Mammary epithelial cell (primary cell): ENCODE measurements at regions of chr22 and their contacts with region 1.

Region 1: GRCh38 chr22:36461669-36462649 is 19.5 kb downstream of the TXN2 start:
- DNase-seq: peak; percentile 92
- H3K4me3 ChIP-seq: no peak overlapping the region
- H3K27ac ChIP-seq: peak overlapping the region; percentile 64
- H3K4me1 ChIP-seq: peaks cover 36% of the 10 kb centered on the region
- H3K27me3 ChIP-seq: no peaks in the 10 kb centered on the region
- CTCF ChIP-seq: no peak

Region 2: GRCh38 chr22:36301384-36301828 is 160.6 kb before region 1 on chr22:
- CTCF ChIA-PET with region 1: no interaction called
- dilution Hi-C with region 1: no loop called
- in situ Hi-C with region 1: loop called in 1 of 2 experiments (anchors 5 kb)
- intact Hi-C with region 1: no loop called
- DNase-seq: peak; percentile 56
- H3K4me3 ChIP-seq: no peak overlapping the region
- H3K27ac ChIP-seq: no peak overlapping the region
- H3K4me1 ChIP-seq: peaks cover 12% of the 10 kb centered on the region
- H3K27me3 ChIP-seq: no peaks in the 10 kb centered on the region
- CTCF ChIP-seq: peak; percentile 88 to 98

Region 3: DNA sequence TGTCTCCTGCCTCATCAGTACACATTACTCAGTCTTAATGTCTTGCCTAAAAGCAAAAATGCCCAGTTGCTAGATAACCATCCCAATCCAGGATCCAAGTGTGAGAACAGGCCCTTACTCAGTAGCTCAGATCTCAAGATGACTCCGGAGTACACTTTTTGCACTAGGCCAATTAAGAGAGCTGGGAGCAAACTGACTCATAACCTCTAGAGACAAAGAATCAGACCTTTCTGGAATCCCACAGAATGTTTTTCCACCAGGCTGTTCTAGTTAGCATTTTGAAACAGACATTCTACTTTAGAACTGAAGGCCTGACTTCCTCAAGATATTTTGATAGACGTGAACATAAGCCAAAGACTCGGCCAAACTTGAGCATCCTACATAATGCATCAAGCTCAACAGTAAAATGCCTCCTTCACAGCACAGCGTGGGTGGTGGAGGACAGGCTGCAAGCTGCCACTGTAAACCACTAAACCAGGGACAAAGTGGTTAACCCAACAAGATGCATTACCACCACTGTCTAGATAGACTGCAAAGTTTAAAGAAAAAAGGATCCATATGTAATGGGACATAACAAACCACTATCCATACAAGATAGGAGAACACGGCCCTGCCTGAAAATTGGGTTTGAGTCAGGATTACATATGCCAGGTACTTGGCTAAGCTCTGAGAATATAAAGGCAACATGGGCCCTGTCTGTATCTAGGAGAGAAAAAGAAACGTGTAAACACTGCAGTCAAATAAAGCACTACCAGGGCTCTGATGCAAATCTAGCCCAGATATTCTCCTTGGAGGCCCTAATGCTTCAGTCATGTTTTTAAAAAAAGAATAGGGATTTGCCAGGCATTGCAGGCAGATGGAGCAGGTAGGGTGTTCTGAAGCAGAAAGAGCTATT is 122.5 kb before region 1 on chr22:
- CTCF ChIA-PET with region 1: no interaction called
- dilution Hi-C with region 1: loop called (anchors 5 kb)
- in situ Hi-C with region 1: no loop called
- intact Hi-C with region 1: no loop called
- DNase-seq: peak; percentile 73
- H3K4me3 ChIP-seq: no peak overlapping the region
- H3K27ac ChIP-seq: peak overlapping the region; percentile 53
- H3K4me1 ChIP-seq: peaks cover 78% of the 10 kb centered on the region
- H3K27me3 ChIP-seq: no peaks in the 10 kb centered on the region
- CTCF ChIP-seq: no peak

Region 4: DNA sequence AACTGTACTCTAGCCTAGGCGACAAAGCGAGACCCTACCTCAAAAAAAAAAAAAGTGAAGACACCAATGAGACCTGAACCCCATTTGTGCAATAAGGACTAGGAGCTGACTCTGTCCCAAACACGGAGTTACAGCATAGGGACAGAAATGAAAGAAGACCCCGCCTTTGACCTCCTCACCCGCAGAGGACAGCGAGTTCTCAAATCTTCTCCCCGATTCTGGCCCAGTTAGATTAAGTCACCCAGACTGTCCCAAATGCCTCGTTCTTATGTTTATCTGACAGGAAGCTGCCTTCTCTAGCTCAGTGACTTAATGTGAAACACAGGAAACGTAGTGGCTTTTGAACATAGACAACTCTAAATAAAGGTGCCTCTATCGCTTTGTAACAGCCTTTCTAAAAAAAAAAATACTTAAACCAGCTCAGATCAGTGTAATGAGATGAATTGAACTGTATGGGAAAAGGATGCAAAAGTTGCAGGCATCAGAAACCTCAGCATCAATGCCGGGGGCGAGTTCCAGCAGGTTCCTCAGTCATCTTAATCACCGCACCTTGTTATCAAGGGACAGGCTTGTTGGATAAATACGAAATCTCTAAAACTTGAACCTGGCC is 84.8 kb before region 1 on chr22:
- CTCF ChIA-PET with region 1: no interaction called
- dilution Hi-C with region 1: no loop called
- in situ Hi-C with region 1: no loop called
- intact Hi-C with region 1: no loop called
- DNase-seq: no peak
- H3K4me3 ChIP-seq: no peak overlapping the region
- H3K27ac ChIP-seq: no peak overlapping the region
- H3K4me1 ChIP-seq: peaks cover 85% of the 10 kb centered on the region
- H3K27me3 ChIP-seq: no peaks in the 10 kb centered on the region
- CTCF ChIP-seq: no peak

Region 5: DNA sequence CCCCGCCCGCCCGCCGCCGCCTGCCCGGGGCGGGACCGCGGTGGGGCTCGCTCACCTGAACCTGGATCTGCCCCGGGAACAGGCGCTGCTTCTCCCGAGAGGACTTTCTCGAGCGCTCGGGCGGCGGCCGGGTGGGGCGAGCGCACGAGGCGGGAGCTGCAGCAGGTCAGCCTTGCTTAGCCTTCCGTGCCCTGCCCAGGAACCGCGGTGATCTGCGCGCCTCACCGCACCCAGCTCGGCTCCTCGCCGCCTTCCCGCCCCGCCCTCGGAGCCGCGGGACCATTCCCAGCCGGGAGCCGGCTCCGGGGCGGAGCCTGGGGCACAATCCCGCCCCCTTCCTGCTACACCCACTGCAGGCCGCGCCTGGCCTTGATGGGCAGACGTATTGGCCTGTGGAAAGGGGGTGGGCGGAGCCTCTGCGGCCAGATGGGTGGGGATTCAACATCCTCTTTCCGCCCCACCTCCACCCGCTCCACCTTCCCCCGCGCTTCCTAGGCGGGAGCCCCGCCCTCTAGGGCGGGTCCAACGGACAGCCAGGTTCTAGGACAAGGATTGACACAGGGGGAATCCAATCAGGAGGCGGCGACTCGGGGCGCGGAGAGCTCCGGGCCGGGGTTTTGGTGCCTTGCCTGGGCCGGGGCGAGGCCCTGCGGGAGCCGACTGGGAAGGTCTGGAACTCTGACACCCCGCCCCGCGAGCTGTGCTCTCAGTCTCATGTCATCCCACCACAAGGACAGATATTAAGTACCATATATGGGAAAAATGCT is 74.0 kb before region 1 on chr22 and contains the start of gene MYH9:
- CTCF ChIA-PET with region 1: no interaction called
- dilution Hi-C with region 1: no loop called
- in situ Hi-C with region 1: loop called (anchors 5 to 10 kb)
- intact Hi-C with region 1: loop called (anchors 1 kb)
- DNase-seq: peak; percentile 100
- H3K4me3 ChIP-seq: peak within 1 kb of the TSS; percentile 56 to 90 (median 77)
- H3K27ac ChIP-seq: peak within 1 kb of the TSS; percentile 92
- H3K4me1 ChIP-seq: peaks cover 22% of the 10 kb centered on the region
- H3K27me3 ChIP-seq: no peaks in the 10 kb centered on the region
- CTCF ChIP-seq: no peak
- total RNA-seq, gene MYH9: 1,183 to 1,246 TPM

Region 6: DNA sequence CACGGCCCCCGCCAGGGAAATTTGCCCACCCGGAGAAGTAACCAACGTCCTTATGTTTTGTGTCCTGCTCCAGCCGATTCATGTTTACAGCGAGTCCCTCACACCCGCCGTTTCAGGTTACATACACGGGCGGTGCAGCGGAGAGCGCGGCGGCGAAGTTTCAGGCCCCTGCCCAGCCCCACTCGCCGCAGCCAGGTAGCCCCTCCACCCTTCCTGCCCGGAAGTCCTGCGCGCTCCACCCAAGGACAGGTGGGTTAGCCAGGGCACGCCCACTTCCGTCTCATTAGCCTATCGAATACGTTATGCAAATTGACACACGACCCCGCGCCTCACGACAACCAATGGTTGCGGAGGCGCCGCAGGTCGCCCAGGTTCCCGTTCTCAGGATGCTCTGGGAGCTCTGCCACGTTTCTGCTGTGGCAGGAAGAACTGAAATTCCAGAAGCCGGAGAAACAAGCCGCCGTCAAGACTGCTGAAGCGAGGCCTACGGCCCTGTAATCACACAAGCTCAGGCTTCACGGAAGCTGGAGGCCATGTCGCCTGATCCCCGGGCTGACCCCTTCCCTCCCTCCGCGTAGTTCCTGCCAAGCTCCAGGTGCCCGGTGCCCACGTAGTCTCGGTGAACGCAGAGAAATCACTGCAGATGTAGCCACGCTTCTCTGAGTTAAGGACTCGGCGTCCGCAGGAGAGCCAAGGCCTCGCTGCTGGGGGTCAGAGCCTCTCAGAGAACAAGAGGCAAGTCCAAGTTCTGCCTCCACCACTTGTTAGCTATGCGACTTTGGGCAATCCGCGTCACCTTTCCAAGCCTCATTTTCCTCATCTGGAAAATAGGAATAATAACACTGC is 51.8 kb before region 1 on chr22:
- CTCF ChIA-PET with region 1: no interaction called
- dilution Hi-C with region 1: no loop called
- in situ Hi-C with region 1: no loop called
- intact Hi-C with region 1: loop called (anchors 1 kb)
- DNase-seq: peak; percentile 98
- H3K4me3 ChIP-seq: peak overlapping the region; percentile 55 to 81 (median 67)
- H3K27ac ChIP-seq: peak overlapping the region; percentile 73
- H3K4me1 ChIP-seq: peaks cover 24% of the 10 kb centered on the region
- H3K27me3 ChIP-seq: no peaks in the 10 kb centered on the region
- CTCF ChIP-seq: peak; percentile 8 to 10